Endothelial cell of umbilical vein (primary cell): ENCODE measurements at regions of chr3 and their contacts with region 1.

Region 1: GRCh38 chr3:7285505-7285904 is 424.6 kb downstream of the GRM7 start:
- DNase-seq: peak; percentile 49
- H3K4me3 ChIP-seq: no peak overlapping the region
- H3K27ac ChIP-seq: no peak overlapping the region
- H3K4me1 ChIP-seq: peaks cover 28% of the 10 kb centered on the region
- H3K27me3 ChIP-seq: no peaks in the 10 kb centered on the region
- CTCF ChIP-seq: peak in 1 of 2 donors; percentile 14
- POLR2A ChIP-seq: no peak

Region 2: DNA sequence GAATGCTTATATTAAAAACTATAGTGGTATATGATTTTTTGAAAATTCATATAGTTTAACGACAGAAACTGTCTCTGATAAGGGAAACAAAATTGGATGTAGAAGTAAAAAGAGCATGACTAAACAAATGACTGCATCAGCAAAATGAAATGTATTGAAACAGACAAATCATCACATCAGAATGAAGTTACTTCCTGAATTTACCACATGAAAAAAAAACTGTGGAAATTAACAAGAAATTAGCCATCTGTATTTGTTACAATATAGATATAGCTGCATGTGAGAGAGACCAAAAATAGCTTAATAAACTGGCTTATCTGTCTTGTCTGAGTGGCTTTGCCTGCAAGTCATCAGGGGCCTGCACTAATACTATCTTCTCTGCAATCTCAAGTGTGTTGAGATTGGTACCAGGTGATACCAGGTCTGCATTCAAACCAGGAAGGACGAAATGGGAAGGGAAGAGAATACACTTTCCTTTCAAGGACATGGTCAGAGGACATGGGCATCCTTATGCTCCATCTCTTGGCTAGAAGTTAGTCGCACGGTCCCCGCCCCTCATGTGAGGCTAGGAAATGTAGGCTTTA is 35.9 kb before region 1 on chr3:
- CTCF ChIA-PET with region 1: no interaction called
- POLR2A ChIA-PET with region 1: no interaction called
- dilution Hi-C with region 1: no loop called
- intact Hi-C with region 1: no loop called
- DNase-seq: no peak
- H3K4me3 ChIP-seq: no peak overlapping the region
- H3K27ac ChIP-seq: no peak overlapping the region
- H3K4me1 ChIP-seq: no peaks in the 10 kb centered on the region
- H3K27me3 ChIP-seq: no peaks in the 10 kb centered on the region
- CTCF ChIP-seq: no peak
- POLR2A ChIP-seq: no peak

Region 3: GRCh38 chr3:7346364-7346763 is 60.9 kb after region 1 on chr3:
- CTCF ChIA-PET with region 1: interaction called, 3 read pairs
- POLR2A ChIA-PET with region 1: no interaction called
- dilution Hi-C with region 1: no loop called
- intact Hi-C with region 1: loop called (anchors 5 kb)
- DNase-seq: peak; percentile 97
- H3K4me3 ChIP-seq: peak overlapping the region in 1 of 3 experiments; percentile 6
- H3K27ac ChIP-seq: peak overlapping the region; percentile 97
- H3K4me1 ChIP-seq: peaks cover 24% of the 10 kb centered on the region
- H3K27me3 ChIP-seq: no peaks in the 10 kb centered on the region
- CTCF ChIP-seq: no peak
- POLR2A ChIP-seq: peak; percentile 19

Region 4: DNA sequence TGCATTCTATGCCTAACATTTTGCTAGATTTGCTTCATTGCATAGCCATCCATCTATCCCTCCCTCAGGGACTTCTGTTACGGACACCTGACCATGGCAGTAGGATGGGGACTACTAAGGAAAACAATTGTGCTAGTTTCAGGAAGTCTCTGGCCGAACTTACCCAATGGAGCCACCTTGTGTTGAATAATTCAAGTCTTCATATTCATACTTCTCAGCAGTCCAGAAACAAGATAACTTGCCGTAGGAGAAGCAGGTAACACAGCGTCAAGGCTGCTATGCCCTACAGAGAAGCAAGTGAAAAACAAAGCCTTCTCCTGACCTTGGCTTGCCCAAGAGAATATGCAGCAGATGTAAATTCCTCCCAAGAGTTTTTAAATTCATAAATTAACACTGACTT is 260.7 kb after region 1 on chr3:
- CTCF ChIA-PET with region 1: no interaction called
- POLR2A ChIA-PET with region 1: no interaction called
- dilution Hi-C with region 1: no loop called
- intact Hi-C with region 1: loop called (anchors 1 kb)
- DNase-seq: peak; percentile 79
- H3K4me3 ChIP-seq: no peak overlapping the region
- H3K27ac ChIP-seq: no peak overlapping the region
- H3K4me1 ChIP-seq: no peaks in the 10 kb centered on the region
- H3K27me3 ChIP-seq: no peaks in the 10 kb centered on the region
- CTCF ChIP-seq: peak; percentile 6 to 13
- POLR2A ChIP-seq: no peak

Region 5: GRCh38 chr3:7734456-7734855 is 449.0 kb after region 1 on chr3:
- CTCF ChIA-PET with region 1: no interaction called
- POLR2A ChIA-PET with region 1: no interaction called
- dilution Hi-C with region 1: no loop called
- intact Hi-C with region 1: loop called (anchors 2 kb)
- DNase-seq: peak; percentile 71
- H3K4me3 ChIP-seq: no peak overlapping the region
- H3K27ac ChIP-seq: peak overlapping the region; percentile 85
- H3K4me1 ChIP-seq: peaks cover 33% of the 10 kb centered on the region
- H3K27me3 ChIP-seq: no peaks in the 10 kb centered on the region
- CTCF ChIP-seq: no peak
- POLR2A ChIP-seq: no peak

Region 6: GRCh38 chr3:7800006-7800780 is 514.7 kb after region 1 on chr3:
- CTCF ChIA-PET with region 1: no interaction called
- POLR2A ChIA-PET with region 1: no interaction called
- dilution Hi-C with region 1: no loop called
- intact Hi-C with region 1: loop called (anchors 10 kb)
- DNase-seq: peak; percentile 34
- H3K4me3 ChIP-seq: no peak overlapping the region
- H3K27ac ChIP-seq: no peak overlapping the region
- H3K4me1 ChIP-seq: no peaks in the 10 kb centered on the region
- H3K27me3 ChIP-seq: no peaks in the 10 kb centered on the region
- CTCF ChIP-seq: peak; percentile 6
- POLR2A ChIP-seq: no peak